ENCODE measurements at regions of chr1 and their contacts with region 1.

Region 1: GRCh38 chr1:38859561-38860453 is at the start of gene RRAGC:
- DNase-seq: peak; percentile 99
- H3K4me3 Mint-ChIP-seq: peak within 1 kb of the TSS; percentile 99
- H3K27ac Mint-ChIP-seq: peak within 1 kb of the TSS; percentile 95
- H3K4me1 Mint-ChIP-seq: peaks cover 71% of the 10 kb centered on the region
- H3K27me3 Mint-ChIP-seq: no peaks in the 10 kb centered on the region
- total RNA-seq, gene RRAGC: 27.6 to 29.7 TPM

Region 2: GRCh38 chr1:38848071-38848470 is 11.7 kb before region 1 on chr1:
- CTCF ChIA-PET with region 1: no interaction called
- POLR2A ChIA-PET with region 1: no interaction called
- intact Hi-C with region 1: no loop called
- DNase-seq: no peak
- H3K4me3 Mint-ChIP-seq: no peak overlapping the region
- H3K27ac Mint-ChIP-seq: no peak overlapping the region
- H3K4me1 Mint-ChIP-seq: peaks cover 31% of the 10 kb centered on the region
- H3K27me3 Mint-ChIP-seq: no peaks in the 10 kb centered on the region

Region 3: DNA sequence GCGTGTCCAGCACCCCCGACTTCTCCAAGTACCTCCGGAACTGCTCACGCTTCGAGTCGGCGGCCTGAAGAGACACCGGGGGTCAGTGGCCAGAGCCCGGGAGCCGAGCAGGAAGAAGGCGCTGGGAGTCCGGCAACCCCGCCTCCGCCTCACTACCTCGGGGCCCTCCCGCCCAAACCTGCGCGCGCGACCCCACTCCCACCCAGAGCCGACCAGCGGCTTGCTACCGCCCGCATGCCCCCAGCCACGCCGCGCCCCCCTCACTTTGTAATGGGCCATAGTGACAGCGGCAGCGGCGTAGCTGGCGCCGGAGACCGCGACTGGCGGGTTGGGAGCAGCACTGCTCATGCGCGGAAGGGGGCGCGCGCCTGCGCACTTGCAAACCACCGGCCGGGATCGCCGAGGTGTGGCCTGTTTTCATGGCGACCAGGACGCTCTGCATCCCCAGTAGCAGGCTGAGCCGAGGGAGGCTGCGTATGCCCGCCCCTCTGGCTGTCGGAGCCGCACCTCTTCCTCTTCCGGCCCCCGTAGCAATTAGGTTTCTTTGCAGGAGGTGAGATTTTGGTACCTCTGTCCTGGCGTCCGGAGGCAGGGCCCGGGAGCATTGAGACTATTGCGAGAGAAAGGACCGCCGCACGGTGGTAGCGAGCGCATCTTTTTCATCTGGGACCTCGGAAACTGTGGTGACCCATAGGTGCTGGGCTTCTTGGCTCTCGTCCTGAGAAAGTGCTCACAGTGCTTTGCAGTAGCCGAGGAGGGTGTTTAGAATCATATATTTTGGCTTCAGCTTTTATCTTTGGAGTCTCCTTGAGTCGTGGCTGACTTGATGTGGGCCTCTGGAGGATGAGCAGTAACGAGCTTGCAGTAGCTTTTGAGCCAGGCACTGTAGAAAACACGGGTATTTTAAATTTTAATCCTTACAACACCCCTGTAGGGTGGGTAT is 13.5 kb after region 1 on chr1 and contains the start of gene MYCBP:
- CTCF ChIA-PET with region 1: interaction called, 4 read pairs
- POLR2A ChIA-PET with region 1: interaction called, 11 read pairs
- intact Hi-C with region 1: loop called (anchors 1 kb)
- DNase-seq: peak; percentile 98
- H3K4me3 Mint-ChIP-seq: peak within 1 kb of the TSS; percentile 91
- H3K27ac Mint-ChIP-seq: peak within 1 kb of the TSS; percentile 71
- H3K4me1 Mint-ChIP-seq: peaks cover 26% of the 10 kb centered on the region
- H3K27me3 Mint-ChIP-seq: no peaks in the 10 kb centered on the region
- total RNA-seq, gene MYCBP: 70.6 to 76.5 TPM

Region 4: GRCh38 chr1:38919130-38919529 is 59.3 kb after region 1 on chr1:
- CTCF ChIA-PET with region 1: no interaction called
- POLR2A ChIA-PET with region 1: no interaction called
- intact Hi-C with region 1: no loop called
- DNase-seq: no peak
- H3K4me3 Mint-ChIP-seq: no peak overlapping the region
- H3K27ac Mint-ChIP-seq: no peak overlapping the region
- H3K4me1 Mint-ChIP-seq: peaks cover 17% of the 10 kb centered on the region
- H3K27me3 Mint-ChIP-seq: no peaks in the 10 kb centered on the region

Measured in activated CD4-positive, alpha-beta memory T cell treated with anti-CD3 and anti-CD28 coated beads for 36 hours (primary cell).